ENCODE measurements at regions of chr3 and their contacts with region 1.

Region 1: DNA sequence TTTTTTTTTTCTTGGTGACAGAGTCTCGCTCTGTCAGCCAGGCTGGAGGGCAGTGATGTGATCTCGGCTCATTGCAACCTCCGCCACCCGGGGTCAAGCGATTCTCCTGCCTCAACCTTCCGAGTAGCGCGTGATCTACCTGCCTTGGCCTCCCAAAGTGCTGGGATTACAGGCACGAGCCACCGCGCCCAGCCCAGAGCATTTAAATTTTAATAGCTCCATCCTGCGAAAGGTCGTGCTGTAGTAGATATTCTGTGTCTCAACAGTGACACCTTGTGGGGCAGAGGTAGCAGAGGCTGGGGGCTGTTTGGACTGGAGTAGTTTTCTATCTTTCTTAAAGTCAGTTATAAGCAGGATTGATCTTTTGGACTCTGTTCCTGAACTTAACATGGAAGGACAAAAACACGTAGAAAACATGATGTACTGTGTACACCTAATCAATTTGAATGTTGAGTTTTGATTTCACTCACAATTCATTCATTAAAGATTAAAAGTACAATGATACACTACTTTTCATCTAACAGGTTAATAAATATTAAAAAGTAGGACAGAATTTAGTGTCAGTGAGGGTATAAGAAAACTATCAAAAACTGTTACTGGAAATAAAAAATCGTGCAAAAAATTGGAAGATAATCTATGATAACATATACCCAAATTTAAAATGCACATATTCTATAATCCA is 11.0 kb upstream of the PDCD6IP start:
- DNase-seq: no peak
- H3K4me3 ChIP-seq: peak overlapping the region; percentile 24
- H3K27me3 ChIP-seq: no peaks in the 10 kb centered on the region
- CTCF ChIP-seq: peak; percentile 84

Region 2: DNA sequence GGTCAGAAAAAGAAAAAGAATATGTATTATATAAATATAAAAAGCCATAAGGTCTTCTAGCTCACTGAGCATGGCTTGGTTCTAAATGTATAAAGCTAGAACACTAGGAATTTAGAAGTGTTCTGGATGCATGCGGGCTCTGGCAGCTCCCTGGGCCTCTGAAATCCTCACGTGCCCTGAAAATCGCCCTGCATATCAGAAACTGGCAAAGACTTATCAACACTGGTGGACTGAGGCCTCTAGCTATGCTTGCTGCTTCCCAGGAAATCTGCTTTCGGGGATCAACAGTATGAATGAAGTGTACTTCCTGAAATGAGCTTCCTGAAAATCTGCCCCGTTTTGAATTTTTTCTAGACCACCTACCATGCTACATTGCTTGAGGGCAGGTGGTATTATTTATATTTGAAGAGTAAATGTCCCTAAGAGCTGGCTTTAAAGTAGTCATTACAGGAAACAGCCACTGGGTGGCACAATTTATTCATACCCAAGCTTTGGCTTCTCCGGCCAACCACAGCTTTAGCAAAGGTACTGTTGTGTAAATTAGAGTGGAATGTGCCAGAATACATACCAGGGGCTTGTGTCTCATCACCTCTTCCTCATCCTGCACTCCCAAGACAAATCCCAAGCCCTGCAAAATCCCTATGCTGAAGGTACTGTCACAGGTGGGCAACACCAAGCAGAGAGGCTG is 656.0 kb before region 1 on chr3:
- CTCF ChIA-PET with region 1: interaction called, 10 read pairs
- POLR2A ChIA-PET with region 1: no interaction called
- DNase-seq: no peak
- H3K4me3 ChIP-seq: no peak overlapping the region
- H3K27me3 ChIP-seq: no peaks in the 10 kb centered on the region
- CTCF ChIP-seq: peak; percentile 62

Region 3: GRCh38 chr3:33629219-33629618 is 158.2 kb before region 1 on chr3:
- CTCF ChIA-PET with region 1: interaction called, 13 read pairs
- POLR2A ChIA-PET with region 1: no interaction called
- DNase-seq: no peak
- H3K4me3 ChIP-seq: no peak overlapping the region
- H3K27me3 ChIP-seq: no peaks in the 10 kb centered on the region
- CTCF ChIP-seq: no peak

Region 4: DNA sequence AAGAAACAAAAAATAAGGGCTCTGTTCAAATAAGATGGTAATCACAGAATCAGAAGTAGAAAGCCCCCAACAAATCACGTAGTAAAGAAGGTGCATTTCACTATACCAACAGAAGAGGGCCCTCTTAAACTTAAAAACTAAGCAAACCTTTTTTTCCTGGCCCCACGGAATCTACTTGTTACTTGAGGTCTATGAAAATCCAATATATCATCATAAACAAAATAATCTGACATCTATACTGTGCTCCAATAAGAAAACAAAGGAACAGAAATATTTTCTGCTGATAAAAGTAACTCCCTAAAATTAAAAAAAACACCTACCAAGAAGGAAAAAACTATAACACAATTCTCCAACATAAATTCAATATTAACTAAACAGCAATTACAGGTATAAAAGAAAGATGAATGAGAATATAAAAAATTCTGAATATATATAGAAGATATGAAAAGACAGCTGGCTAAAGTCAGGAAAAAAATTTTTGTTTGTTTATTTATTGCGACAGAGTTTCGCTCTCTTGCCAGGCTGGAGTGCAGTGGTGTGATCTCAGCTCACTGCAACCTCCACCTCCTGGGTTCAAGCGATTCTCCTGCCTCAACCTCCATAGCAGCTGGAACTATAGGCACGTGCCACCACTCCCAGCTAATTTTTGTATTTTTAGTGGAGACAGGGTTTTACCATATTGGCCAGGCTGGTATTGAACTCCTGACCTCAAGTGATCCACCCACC is 151.2 kb before region 1 on chr3:
- CTCF ChIA-PET with region 1: interaction called, 27 read pairs
- POLR2A ChIA-PET with region 1: no interaction called
- DNase-seq: no peak
- H3K4me3 ChIP-seq: no peak overlapping the region
- H3K27me3 ChIP-seq: no peaks in the 10 kb centered on the region
- CTCF ChIP-seq: peak; percentile 61

Region 5: DNA sequence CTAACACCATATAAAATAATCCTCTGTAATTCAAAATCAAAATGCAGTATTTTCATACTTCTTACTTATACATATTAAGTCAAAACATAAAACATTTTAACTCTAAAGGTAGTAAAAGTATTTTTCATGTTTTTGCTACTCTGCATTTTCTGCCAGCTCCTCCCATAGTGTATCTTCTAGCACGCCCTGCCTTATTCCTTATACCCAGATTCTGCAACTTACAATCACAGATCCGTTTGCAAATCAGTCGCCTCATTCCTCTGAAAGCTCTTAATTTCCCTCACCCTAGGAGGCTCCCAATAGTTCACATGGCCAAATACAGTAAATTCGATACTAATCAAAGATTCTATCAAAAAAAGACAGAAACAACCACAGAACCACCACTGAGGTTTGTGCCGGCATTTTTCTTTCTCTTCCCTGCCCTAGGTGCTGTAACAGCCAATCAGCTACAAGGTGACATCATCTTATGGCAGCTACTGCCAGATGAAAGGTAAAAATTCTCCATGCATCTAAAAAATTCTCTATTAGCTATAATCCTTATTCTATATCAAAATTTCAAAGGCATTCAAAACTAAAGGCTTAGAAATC is 142.3 kb before region 1 on chr3:
- CTCF ChIA-PET with region 1: interaction called, 11 read pairs
- POLR2A ChIA-PET with region 1: no interaction called
- DNase-seq: no peak
- H3K4me3 ChIP-seq: no peak overlapping the region
- H3K27me3 ChIP-seq: no peaks in the 10 kb centered on the region
- CTCF ChIP-seq: no peak

Region 6: DNA sequence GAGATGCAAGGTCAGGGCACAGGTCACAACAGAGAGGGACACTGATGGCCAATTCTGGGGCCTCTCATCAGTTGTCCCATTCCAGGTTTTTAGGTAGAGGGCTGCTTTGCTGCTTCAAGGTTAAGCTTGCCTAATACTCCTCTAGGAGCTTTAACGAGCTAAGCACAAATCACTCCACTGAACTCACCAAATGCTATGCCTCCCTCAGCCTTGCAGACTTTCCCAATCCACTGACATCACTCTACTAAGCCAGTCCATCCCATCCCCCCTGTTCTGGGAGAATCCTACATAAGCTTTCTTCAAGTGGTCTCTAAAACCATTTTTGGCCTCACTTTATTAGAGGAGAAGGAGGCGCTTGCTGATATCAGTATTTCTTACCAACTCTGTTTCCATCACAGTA is 13.8 kb before region 1 on chr3:
- CTCF ChIA-PET with region 1: interaction called, 36 read pairs
- POLR2A ChIA-PET with region 1: no interaction called
- DNase-seq: no peak
- H3K4me3 ChIP-seq: no peak overlapping the region
- H3K27me3 ChIP-seq: no peaks in the 10 kb centered on the region
- CTCF ChIP-seq: no peak

Region 7: GRCh38 chr3:33798411-33799201 is 11.1 kb after region 1 on chr3 and contains the start of gene PDCD6IP:
- CTCF ChIA-PET with region 1: interaction called, 10 read pairs
- POLR2A ChIA-PET with region 1: interaction called, 4 read pairs
- DNase-seq: peak; percentile 59
- H3K4me3 ChIP-seq: peak within 1 kb of the TSS; percentile 85
- H3K27me3 ChIP-seq: no peaks in the 10 kb centered on the region
- CTCF ChIP-seq: no peak; the same call in 1 of the 2 replicates
- polyA plus RNA-seq, gene PDCD6IP: 136 and 164 TPM in 2 replicates